ENCODE measurements at regions of chr9 and their contacts with region 1.

Region 1: DNA sequence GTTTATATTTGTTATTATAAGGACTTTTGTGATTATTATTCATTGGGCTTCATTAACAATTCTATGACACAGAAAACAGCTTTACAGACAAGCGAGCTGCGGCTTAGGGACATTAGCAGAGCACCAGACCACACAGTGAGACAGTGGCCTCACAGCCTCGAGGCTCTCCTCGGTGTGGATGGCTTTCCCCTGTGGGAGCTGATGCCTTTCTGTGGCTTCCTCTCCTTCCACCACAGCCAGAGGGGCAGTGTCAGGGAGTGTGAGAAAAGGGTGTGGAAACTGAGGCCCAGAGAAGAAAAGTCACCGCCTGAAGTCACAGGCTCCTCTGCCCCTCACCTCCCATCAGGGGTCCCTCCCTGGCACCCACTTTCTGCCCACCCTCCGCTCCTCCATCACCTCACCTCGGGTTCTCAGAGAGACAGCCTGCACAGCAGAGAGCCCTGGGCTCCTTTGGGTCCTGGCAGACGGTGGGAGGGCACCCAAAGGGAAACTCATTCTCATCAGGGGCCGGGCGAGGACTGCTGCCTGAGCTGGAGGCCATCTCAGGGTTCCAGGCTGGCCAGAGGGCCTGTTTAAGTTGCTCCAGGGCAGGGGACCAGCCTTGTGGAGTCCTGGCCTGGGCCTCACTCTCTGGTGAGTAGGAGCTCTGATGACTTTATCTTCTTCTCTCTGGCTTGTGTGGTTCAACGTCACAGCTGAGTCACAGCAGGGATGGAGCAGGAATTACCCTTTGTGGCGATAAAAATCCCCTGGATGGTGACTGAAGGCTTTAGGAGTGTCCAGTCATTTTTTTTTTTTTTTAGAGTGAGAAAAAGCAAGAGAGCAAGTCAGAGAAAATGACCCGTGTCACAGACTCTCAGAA is 830 bp downstream of the TRAF1 start:
- DNase-seq: peak; percentile 72
- CTCF ChIP-seq: no peak

Region 2: GRCh38 chr9:120894321-120895148 is 31.2 kb before region 1 on chr9:
- CTCF ChIA-PET with region 1: interaction called, 8 read pairs
- POLR2A ChIA-PET with region 1: interaction called, 22 read pairs
- DNase-seq: no peak
- CTCF ChIP-seq: no peak

Region 3: GRCh38 chr9:120950421-120951388 is 24.9 kb after region 1 on chr9:
- CTCF ChIA-PET with region 1: no interaction called
- POLR2A ChIA-PET with region 1: no interaction called
- DNase-seq: no peak
- CTCF ChIP-seq: no peak

Measured in GM10248 (cell line).